Endothelial cell of umbilical vein (primary cell): ENCODE measurements at regions of chr3 and their contacts with region 1.

Region 1: GRCh38 chr3:114551770-114552526 is 258.1 kb downstream of the TIGIT start:
- DNase-seq: peak; percentile 46
- H3K4me3 ChIP-seq: no peak overlapping the region
- H3K27ac ChIP-seq: peak overlapping the region; percentile 33
- H3K4me1 ChIP-seq: peaks cover 21% of the 10 kb centered on the region
- H3K27me3 ChIP-seq: no peaks in the 10 kb centered on the region
- CTCF ChIP-seq: no peak
- POLR2A ChIP-seq: no peak

Region 2: GRCh38 chr3:114393367-114394072 is 158.4 kb before region 1 on chr3:
- CTCF ChIA-PET with region 1: no interaction called
- POLR2A ChIA-PET with region 1: no interaction called
- dilution Hi-C with region 1: no loop called
- intact Hi-C with region 1: no loop called
- DNase-seq: no peak
- H3K4me3 ChIP-seq: no peak overlapping the region
- H3K27ac ChIP-seq: no peak overlapping the region
- H3K4me1 ChIP-seq: no peaks in the 10 kb centered on the region
- H3K27me3 ChIP-seq: no peaks in the 10 kb centered on the region
- CTCF ChIP-seq: no peak
- POLR2A ChIP-seq: no peak

Region 3: GRCh38 chr3:114566162-114566755 is 14.3 kb after region 1 on chr3:
- CTCF ChIA-PET with region 1: interaction called, 12 read pairs
- POLR2A ChIA-PET with region 1: no interaction called
- dilution Hi-C with region 1: no loop called
- intact Hi-C with region 1: loop called (anchors 1 kb)
- DNase-seq: peak; percentile 48
- H3K4me3 ChIP-seq: no peak overlapping the region
- H3K27ac ChIP-seq: peak overlapping the region; percentile 20
- H3K4me1 ChIP-seq: peaks cover 24% of the 10 kb centered on the region
- H3K27me3 ChIP-seq: no peaks in the 10 kb centered on the region
- CTCF ChIP-seq: no peak
- POLR2A ChIP-seq: no peak

Region 4: DNA sequence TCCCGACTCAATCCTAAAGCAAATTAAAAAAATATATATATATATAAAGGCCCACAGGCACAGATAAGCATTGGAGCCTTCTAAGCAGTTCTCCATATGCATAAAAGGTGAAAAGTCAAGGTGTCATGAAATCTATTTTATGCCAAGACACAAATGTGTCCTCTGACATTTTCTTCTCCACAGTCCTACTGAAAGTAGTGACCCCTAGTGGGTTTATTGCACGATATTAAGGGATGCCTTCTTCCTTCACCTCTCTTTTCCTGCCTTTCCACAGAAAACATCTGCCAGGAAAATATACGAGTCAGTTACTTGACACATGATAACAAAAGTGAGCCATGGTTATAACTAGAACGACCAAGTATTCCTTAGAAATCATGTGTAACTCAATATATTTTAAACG is 45.1 kb after region 1 on chr3:
- CTCF ChIA-PET with region 1: no interaction called
- POLR2A ChIA-PET with region 1: no interaction called
- dilution Hi-C with region 1: no loop called
- intact Hi-C with region 1: no loop called
- DNase-seq: no peak
- H3K4me3 ChIP-seq: no peak overlapping the region
- H3K27ac ChIP-seq: no peak overlapping the region
- H3K4me1 ChIP-seq: no peaks in the 10 kb centered on the region
- H3K27me3 ChIP-seq: no peaks in the 10 kb centered on the region
- CTCF ChIP-seq: no peak
- POLR2A ChIP-seq: no peak

Region 5: DNA sequence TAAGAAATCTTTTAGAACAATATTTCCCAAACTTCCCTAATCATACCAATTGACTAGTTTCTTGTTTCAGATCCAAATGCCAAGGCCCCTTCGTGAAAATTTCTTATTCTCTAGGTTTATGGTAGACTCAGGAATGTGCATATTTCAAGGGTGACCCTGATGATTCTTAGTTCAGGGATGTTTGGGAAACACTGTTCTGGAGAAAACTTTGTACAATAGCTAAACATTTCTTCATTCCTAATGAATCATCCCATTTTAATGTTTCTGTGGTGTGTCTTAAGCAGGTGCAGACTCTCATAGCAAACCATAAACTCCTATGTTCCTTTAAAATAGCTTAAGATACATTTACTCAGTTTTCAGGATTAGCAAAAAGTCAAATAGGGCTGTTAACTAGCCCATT is 56.3 kb after region 1 on chr3:
- CTCF ChIA-PET with region 1: no interaction called
- POLR2A ChIA-PET with region 1: no interaction called
- dilution Hi-C with region 1: no loop called
- intact Hi-C with region 1: no loop called
- DNase-seq: no peak
- H3K4me3 ChIP-seq: no peak overlapping the region
- H3K27ac ChIP-seq: no peak overlapping the region
- H3K4me1 ChIP-seq: peaks cover 2% of the 10 kb centered on the region
- H3K27me3 ChIP-seq: no peaks in the 10 kb centered on the region
- CTCF ChIP-seq: no peak
- POLR2A ChIP-seq: no peak

Region 6: DNA sequence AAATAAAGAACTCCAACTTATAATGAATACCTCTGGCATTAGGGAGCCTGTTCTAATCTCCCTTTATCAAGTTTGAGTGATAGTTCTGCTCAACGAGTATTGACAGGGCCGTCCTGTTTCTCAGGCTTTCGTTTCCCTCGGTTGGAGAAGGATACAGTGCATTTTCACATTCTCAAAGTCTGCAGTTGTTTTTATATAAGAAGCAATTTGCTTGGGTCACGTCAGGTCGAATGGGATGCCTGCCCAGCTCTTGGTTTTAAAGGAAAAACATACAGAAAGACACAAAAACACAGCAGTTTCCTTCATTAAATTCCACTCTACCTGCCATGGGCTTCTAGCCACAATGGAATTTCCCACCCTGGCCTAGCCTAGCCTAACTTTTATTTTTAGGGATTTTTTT is 108.2 kb after region 1 on chr3:
- CTCF ChIA-PET with region 1: no interaction called
- POLR2A ChIA-PET with region 1: no interaction called
- dilution Hi-C with region 1: no loop called
- intact Hi-C with region 1: no loop called
- DNase-seq: peak; percentile 93
- H3K4me3 ChIP-seq: no peak overlapping the region
- H3K27ac ChIP-seq: no peak overlapping the region
- H3K4me1 ChIP-seq: peaks cover 2% of the 10 kb centered on the region
- H3K27me3 ChIP-seq: no peaks in the 10 kb centered on the region
- CTCF ChIP-seq: no peak
- POLR2A ChIP-seq: no peak